ENCODE measurements at regions of chr10 and their contacts with region 1.

Region 1: GRCh38 chr10:92880233-92880861 is 32.0 kb downstream of the EXOC6 start:
- DNase-seq: no peak
- ATAC-seq: peak; percentile 70
- H3K4me3 Mint-ChIP-seq: no peak overlapping the region
- H3K27ac Mint-ChIP-seq: no peak overlapping the region
- H3K4me1 Mint-ChIP-seq: peaks cover 23% of the 10 kb centered on the region
- H3K27me3 Mint-ChIP-seq: no peaks in the 10 kb centered on the region
- CTCF ChIP-seq: no peak

Region 2: GRCh38 chr10:92181575-92181974 is 698.8 kb before region 1 on chr10:
- CTCF ChIA-PET with region 1: no interaction called
- POLR2A ChIA-PET with region 1: no interaction called
- intact Hi-C with region 1: no loop called
- DNase-seq: no peak
- ATAC-seq: no peak
- H3K4me3 Mint-ChIP-seq: no peak overlapping the region
- H3K27ac Mint-ChIP-seq: no peak overlapping the region
- H3K4me1 Mint-ChIP-seq: peaks cover 7% of the 10 kb centered on the region
- H3K27me3 Mint-ChIP-seq: no peaks in the 10 kb centered on the region
- CTCF ChIP-seq: no peak

Region 3: GRCh38 chr10:92573798-92574547 is 306.4 kb before region 1 on chr10 and contains the start of gene IDE:
- CTCF ChIA-PET with region 1: interaction called, 3 read pairs
- POLR2A ChIA-PET with region 1: no interaction called
- intact Hi-C with region 1: loop called (anchors 1 kb)
- DNase-seq: peak; percentile 84
- ATAC-seq: peak; percentile 76
- H3K4me3 Mint-ChIP-seq: peak within 1 kb of the TSS; percentile 88
- H3K27ac Mint-ChIP-seq: peak within 1 kb of the TSS; percentile 85
- H3K4me1 Mint-ChIP-seq: peaks cover 40% of the 10 kb centered on the region
- H3K27me3 Mint-ChIP-seq: no peaks in the 10 kb centered on the region
- CTCF ChIP-seq: no peak
- total RNA-seq, gene IDE: 37.7 and 39.2 TPM in 2 replicates

Region 4: GRCh38 chr10:92822060-92822634 is 58.2 kb before region 1 on chr10:
- CTCF ChIA-PET with region 1: interaction called, 3 read pairs
- POLR2A ChIA-PET with region 1: no interaction called
- intact Hi-C with region 1: loop called (anchors 1 kb)
- DNase-seq: no peak
- ATAC-seq: no peak
- H3K4me3 Mint-ChIP-seq: peak overlapping the region; percentile 24
- H3K27ac Mint-ChIP-seq: peak overlapping the region; percentile 63
- H3K4me1 Mint-ChIP-seq: peaks cover 26% of the 10 kb centered on the region
- H3K27me3 Mint-ChIP-seq: no peaks in the 10 kb centered on the region
- CTCF ChIP-seq: no peak

Region 5: GRCh38 chr10:93138113-93138870 is 257.9 kb after region 1 on chr10:
- CTCF ChIA-PET with region 1: no interaction called
- POLR2A ChIA-PET with region 1: no interaction called
- intact Hi-C with region 1: no loop called
- DNase-seq: no peak
- ATAC-seq: no peak
- H3K4me3 Mint-ChIP-seq: no peak overlapping the region
- H3K27ac Mint-ChIP-seq: no peak overlapping the region
- H3K4me1 Mint-ChIP-seq: no peaks in the 10 kb centered on the region
- H3K27me3 Mint-ChIP-seq: peaks cover 6% of the 10 kb centered on the region
- CTCF ChIP-seq: no peak

Region 6: DNA sequence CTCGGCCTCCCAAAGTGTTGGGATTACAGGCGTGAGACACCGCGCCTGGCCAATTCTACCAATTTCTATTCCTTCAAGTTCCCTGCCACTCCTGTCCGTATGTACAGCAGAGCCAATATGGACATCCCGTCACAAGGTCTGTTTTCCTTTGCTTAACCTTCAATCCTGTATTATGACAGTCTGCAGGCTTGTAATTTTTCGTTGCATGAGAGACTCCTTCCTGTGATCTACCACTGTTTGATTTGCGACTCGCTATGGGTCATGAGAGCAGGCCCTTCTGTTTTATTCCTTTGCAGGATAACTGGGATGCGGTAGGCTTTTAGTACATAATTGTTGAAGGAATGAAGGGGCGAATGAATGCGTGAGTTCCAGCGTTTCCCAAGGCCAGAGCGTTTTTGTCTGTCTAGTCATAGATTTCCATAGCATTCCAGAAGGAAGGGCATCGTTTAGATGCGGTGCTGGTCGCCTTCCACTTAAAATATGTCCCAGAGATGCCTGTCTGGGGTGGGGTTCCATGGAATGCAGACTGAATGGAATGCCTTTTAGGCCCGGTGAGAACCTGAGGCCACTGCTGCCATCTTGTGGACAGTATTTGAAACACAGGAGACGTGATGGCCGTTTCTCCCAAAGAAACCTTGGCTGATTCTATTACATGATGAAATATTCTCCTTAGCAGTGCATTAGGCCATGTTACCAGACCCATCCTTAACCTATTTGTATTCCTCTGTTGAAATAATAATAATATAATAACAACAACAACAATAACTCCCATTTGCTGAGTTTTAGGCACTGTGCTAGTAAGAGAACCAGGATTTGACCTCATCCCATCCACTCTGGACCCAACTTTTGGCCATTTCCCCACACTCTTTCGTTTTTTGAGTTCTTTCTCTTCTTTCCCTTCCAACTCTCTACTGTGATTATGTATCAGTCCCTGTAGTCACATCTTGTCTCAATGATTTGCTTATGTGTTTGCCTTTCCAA is 408.6 kb after region 1 on chr10:
- CTCF ChIA-PET with region 1: no interaction called
- POLR2A ChIA-PET with region 1: no interaction called
- intact Hi-C with region 1: loop called (anchors 1 kb)
- DNase-seq: peak; percentile 19
- ATAC-seq: no peak
- H3K4me3 Mint-ChIP-seq: no peak overlapping the region
- H3K27ac Mint-ChIP-seq: no peak overlapping the region
- H3K4me1 Mint-ChIP-seq: no peaks in the 10 kb centered on the region
- H3K27me3 Mint-ChIP-seq: no peaks in the 10 kb centered on the region
- CTCF ChIP-seq: peak; percentile 62

Measured in activated B cell treated with CpG ODN at 0.5 μM for 24 hours (primary cell).